ENCODE measurements at regions of chr3 and their contacts with region 1.

Region 1: GRCh38 chr3:151327571-151328198 is 1.7 kb downstream of the P2RY13 start:
- DNase-seq: peak; percentile 36
- H3K4me3 Mint-ChIP-seq: no peak overlapping the region
- H3K27ac Mint-ChIP-seq: no peak overlapping the region
- H3K4me1 Mint-ChIP-seq: peaks cover 8% of the 10 kb centered on the region
- H3K27me3 Mint-ChIP-seq: no peaks in the 10 kb centered on the region
- CTCF ChIP-seq: peak; percentile 52

Region 2: DNA sequence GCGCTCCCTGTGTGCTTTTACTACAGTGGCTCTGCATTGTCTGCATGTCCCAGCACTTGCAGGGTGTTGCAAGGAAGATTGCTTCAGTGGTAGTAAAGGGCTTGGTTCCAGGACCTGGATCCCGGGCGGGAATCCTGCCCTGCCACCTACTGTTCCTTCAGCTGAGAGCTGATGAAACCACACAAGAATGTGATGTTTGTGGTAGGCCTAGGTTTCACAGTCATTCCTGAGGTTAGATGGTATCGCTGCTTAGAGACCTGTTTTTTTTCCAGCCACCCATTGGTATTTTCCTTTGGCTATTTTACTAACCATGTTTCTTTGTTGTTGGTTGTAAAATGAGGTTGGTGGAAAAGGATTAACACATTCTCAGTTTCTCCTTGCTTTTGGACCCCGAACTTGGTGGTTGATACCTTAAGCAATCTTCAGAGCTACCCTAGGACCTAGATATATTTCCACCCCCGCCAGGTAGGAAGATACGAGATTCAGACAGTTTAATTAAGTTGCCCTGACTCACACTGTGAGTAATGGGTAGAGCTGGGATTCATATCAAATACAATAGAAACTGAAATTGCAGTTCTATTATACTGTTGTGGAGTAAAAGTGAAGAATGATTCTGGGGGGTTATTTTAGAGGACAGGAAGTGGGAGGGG is 22.5 kb before region 1 on chr3:
- CTCF ChIA-PET with region 1: interaction called, 65 read pairs
- POLR2A ChIA-PET with region 1: interaction called, 34 read pairs
- intact Hi-C with region 1: no loop called
- DNase-seq: peak; percentile 98
- H3K4me3 Mint-ChIP-seq: peak overlapping the region; percentile 60
- H3K27ac Mint-ChIP-seq: peak overlapping the region; percentile 79
- H3K4me1 Mint-ChIP-seq: peaks cover 89% of the 10 kb centered on the region
- H3K27me3 Mint-ChIP-seq: no peaks in the 10 kb centered on the region
- CTCF ChIP-seq: no peak

Region 3: DNA sequence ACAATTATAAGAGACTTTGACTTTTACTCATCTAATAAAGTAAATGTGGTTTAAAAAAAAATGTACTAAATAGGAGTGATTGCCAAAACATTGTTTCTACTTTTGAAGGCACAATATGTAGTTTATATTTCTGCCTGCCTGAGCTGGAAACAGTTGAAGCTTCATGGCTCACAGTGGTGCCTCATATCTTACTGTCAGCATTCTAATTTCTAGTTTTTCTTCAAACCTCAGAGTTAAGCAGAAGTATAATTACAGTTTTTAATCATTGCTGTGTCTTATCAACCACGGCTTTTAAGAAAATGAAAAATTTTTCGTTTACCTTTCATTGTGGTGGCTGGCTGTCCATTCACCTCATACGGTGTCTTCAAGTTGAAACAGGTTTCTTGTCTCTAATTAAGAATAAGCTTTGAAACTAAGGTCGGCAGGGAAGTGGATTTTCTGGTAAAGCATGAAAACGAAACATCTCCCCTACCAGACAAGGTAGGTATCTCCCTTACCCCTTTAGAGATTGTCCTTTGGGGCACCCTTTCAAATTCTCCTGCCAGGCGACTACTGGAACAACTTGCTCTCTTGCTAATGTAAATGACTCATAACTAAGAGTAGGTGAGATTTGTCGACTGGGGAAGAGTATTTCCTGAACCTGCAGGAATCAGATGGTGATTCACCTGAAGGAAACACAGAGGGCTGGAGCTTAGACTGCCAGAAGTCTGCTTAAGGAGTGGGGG is 11.3 kb before region 1 on chr3 and contains the start of gene GPR87:
- CTCF ChIA-PET with region 1: interaction called, 17 read pairs
- POLR2A ChIA-PET with region 1: interaction called, 17 read pairs
- intact Hi-C with region 1: no loop called
- DNase-seq: peak; percentile 90
- H3K4me3 Mint-ChIP-seq: peak within 1 kb of the TSS; percentile 80
- H3K27ac Mint-ChIP-seq: peak within 1 kb of the TSS; percentile 94
- H3K4me1 Mint-ChIP-seq: peaks cover 28% of the 10 kb centered on the region
- H3K27me3 Mint-ChIP-seq: no peaks in the 10 kb centered on the region
- CTCF ChIP-seq: no peak
- total RNA-seq, gene GPR87: 41.9 and 51.8 TPM in 2 replicates

Measured in MCF 10A (cell line).